ENCODE measurements at regions of chrX and their contacts with region 1.

Region 1: GRCh38 chrX:71365876-71366673 is at the start of gene TAF1:
- DNase-seq: peak; percentile 83 to 95
- ATAC-seq: peak; percentile 84 to 95 (median 89)
- H3K4me3 ChIP-seq: peak within 1 kb of the TSS; percentile 93
- H3K4me3 Mint-ChIP-seq: peak within 1 kb of the TSS; percentile 97
- H3K27ac ChIP-seq: peak within 1 kb of the TSS; percentile 95
- H3K27ac Mint-ChIP-seq: peak within 1 kb of the TSS; percentile 97
- H3K4me1 ChIP-seq: peaks cover 25% of the 10 kb centered on the region
- H3K4me1 Mint-ChIP-seq: peaks cover 22 to 30% of the 10 kb centered on the region in 2 donors
- H3K27me3 ChIP-seq: no peaks in the 10 kb centered on the region
- H3K27me3 Mint-ChIP-seq: peaks cover 0 to 6% of the 10 kb centered on the region in 2 donors
- CTCF ChIP-seq: no peak
- total RNA-seq, gene TAF1: 89.5 to 94.5 (median 94.2) TPM

Region 2: GRCh38 chrX:71283403-71284143 is 82.5 kb before region 1 on chrX and contains the start of gene NONO:
- intact Hi-C with region 1: loop called (anchors 1 kb)
- DNase-seq: peak; percentile 66 to 97
- ATAC-seq: peak; percentile 85 to 94 (median 90)
- H3K4me3 ChIP-seq: peak within 1 kb of the TSS; percentile 69
- H3K4me3 Mint-ChIP-seq: peak within 1 kb of the TSS; percentile 99
- H3K27ac ChIP-seq: peak within 1 kb of the TSS; percentile 93
- H3K27ac Mint-ChIP-seq: peak within 1 kb of the TSS; percentile 99 to 100
- H3K4me1 ChIP-seq: peaks cover 17% of the 10 kb centered on the region
- H3K4me1 Mint-ChIP-seq: peaks cover 16 to 20% of the 10 kb centered on the region in 2 donors
- H3K27me3 ChIP-seq: no peaks in the 10 kb centered on the region
- H3K27me3 Mint-ChIP-seq: peaks cover 7% of the 10 kb centered on the region in 2 donors
- CTCF ChIP-seq: no peak
- total RNA-seq, gene NONO: 370 to 454 (median 439) TPM